Ascending aorta (tissue), 2 donors: ENCODE measurements at regions of chr1 and their contacts with region 1.

Region 1: GRCh38 chr1:37978541-37978940 is 11.3 kb downstream of the SF3A3 start:
- DNase-seq: no peak
- H3K4me3 ChIP-seq: no peak overlapping the region
- H3K27ac ChIP-seq: no peak overlapping the region
- H3K4me1 ChIP-seq: no peaks in the 10 kb centered on the region
- H3K27me3 ChIP-seq: no peaks in the 10 kb centered on the region
- CTCF ChIP-seq: no peak

Region 2: GRCh38 chr1:37890378-37891014 is 88.0 kb before region 1 on chr1:
- intact Hi-C with region 1: loop called (anchors 2 kb)
- DNase-seq: no peak
- H3K4me3 ChIP-seq: no peak overlapping the region
- H3K27ac ChIP-seq: peak overlapping the region; percentile 34 to 62
- H3K4me1 ChIP-seq: no peaks in the 10 kb centered on the region
- H3K27me3 ChIP-seq: no peaks in the 10 kb centered on the region
- CTCF ChIP-seq: peak; percentile 41 to 69 (median 51)

Region 3: DNA sequence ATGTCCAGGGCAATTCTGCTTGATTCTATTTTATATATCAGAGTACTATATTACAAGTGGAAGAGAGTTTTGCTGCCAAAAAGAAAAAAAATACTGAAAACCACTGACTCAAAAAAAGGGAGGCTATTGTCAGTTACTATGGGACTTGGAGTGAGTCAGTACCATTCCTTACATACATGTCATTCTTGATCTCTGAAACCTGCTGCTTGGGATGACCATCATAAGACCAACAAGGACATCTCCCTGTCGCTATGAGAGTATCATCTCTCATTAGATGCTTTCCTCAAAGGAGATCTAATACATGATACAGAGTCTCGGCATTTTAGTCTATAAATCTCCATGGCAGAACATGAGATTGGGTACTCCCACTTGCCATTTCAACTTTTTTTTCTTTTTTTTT is 19.9 kb before region 1 on chr1:
- intact Hi-C with region 1: no loop called
- DNase-seq: no peak
- H3K4me3 ChIP-seq: no peak overlapping the region
- H3K27ac ChIP-seq: no peak overlapping the region
- H3K4me1 ChIP-seq: no peaks in the 10 kb centered on the region
- H3K27me3 ChIP-seq: no peaks in the 10 kb centered on the region
- CTCF ChIP-seq: no peak

Region 4: GRCh38 chr1:38018864-38019343 is 40.4 kb after region 1 on chr1:
- intact Hi-C with region 1: loop called (anchors 5 kb)
- DNase-seq: no peak
- H3K4me3 ChIP-seq: no peak overlapping the region
- H3K27ac ChIP-seq: no peak overlapping the region
- H3K4me1 ChIP-seq: peaks cover 5 to 25% of the 10 kb centered on the region in 2 donors
- H3K27me3 ChIP-seq: no peaks in the 10 kb centered on the region
- CTCF ChIP-seq: peak in 2 of 3 experiments; percentile 37 to 57